IMR-90 (cell line): ENCODE measurements at regions of chr1 and their contacts with region 1.

Region 1: DNA sequence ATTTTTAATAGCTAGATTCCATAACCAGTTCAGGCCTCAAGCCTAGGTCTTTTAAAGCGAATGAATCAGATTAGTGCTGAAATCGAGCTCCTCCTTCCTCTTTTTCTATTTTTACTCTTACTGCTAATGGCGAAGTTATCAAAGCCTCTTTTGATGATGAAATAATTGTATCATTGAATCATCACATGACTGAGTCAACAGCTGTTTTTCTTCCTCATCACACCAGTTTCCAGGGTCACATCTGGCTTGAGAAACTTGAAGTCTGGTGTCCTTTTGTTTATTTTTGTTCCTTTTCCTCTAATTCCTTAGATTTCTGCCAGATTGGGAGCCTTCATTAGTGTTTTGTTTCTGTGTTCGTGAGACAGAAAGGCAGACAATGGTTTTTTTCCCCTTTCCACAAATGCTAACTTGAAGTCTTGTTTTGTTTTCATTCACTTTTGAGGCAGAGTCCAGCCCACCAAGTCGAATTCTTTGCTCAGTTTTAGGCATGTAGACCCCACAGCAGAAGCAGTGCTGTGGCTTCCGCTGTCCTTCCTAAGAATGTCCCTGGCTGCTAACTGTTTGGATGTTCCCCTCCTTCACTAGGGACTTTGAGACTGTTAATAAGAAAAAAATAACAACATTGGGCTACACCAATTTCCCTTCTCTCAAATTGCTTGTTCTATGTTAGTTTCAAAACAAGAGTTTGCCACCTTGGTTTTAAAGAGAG is 51.9 kb upstream of the FMOD start:
- DNase-seq: peak; percentile 98
- ATAC-seq: peak; percentile 82
- H3K4me3 ChIP-seq: no peak overlapping the region
- H3K27ac ChIP-seq: peak overlapping the region; percentile 97
- H3K4me1 ChIP-seq: peaks cover 21% of the 10 kb centered on the region
- H3K27me3 ChIP-seq: no peaks in the 10 kb centered on the region
- CTCF ChIP-seq: no peak
- POLR2A ChIP-seq: no peak
- RAD21 ChIP-seq: no peak

Region 2: DNA sequence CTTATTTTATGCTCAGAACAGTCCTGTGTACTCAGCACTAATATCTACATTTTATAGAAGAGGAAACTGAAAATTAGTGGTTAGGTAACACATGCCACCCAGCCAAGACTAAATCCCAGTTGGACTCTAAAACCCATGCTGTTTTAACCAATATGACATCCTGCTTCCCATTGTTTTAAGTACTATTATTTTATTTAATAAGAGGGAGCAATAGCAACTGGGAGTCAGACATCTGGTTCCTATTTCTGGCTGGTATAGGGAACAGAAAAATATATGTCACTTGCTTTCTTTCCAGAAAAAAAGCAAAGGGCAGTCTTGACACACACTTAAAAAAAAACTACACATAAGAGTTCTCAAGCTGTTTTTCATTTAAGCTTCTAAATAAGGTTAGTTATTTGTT is 487.6 kb before region 1 on chr1:
- CTCF ChIA-PET with region 1: no interaction called
- POLR2A ChIA-PET with region 1: no interaction called
- dilution Hi-C with region 1: no loop called
- in situ Hi-C with region 1: no loop called
- intact Hi-C with region 1: no loop called
- DNase-seq: no peak
- ATAC-seq: no peak
- H3K4me3 ChIP-seq: no peak overlapping the region
- H3K27ac ChIP-seq: no peak overlapping the region
- H3K4me1 ChIP-seq: no peaks in the 10 kb centered on the region
- H3K27me3 ChIP-seq: no peaks in the 10 kb centered on the region
- CTCF ChIP-seq: no peak
- POLR2A ChIP-seq: no peak
- RAD21 ChIP-seq: no peak

Region 3: DNA sequence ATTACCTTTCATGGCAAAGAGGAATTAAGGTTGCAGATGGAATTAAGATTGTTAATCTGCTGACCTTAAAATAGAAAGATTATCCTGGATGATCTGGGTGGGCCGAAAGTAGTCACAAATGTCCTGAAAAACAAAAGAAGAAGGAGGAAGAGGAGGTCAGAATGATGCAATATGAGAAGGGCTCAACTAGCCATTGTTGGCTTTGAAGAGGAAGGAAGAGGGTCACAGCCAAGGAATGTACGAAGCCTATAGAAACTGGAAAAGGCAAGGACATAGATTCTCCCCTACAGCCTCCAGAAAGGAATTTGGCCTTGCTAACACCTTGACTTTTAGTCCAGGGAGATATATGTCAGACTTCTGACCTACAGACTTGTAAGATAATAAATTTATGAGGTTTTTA is 12.5 kb before region 1 on chr1:
- CTCF ChIA-PET with region 1: no interaction called
- POLR2A ChIA-PET with region 1: no interaction called
- dilution Hi-C with region 1: no loop called
- in situ Hi-C with region 1: no loop called
- intact Hi-C with region 1: no loop called
- DNase-seq: no peak
- ATAC-seq: no peak
- H3K4me3 ChIP-seq: no peak overlapping the region
- H3K27ac ChIP-seq: no peak overlapping the region
- H3K4me1 ChIP-seq: no peaks in the 10 kb centered on the region
- H3K27me3 ChIP-seq: peaks cover 10% of the 10 kb centered on the region
- CTCF ChIP-seq: no peak
- POLR2A ChIP-seq: no peak
- RAD21 ChIP-seq: no peak

Region 4: GRCh38 chr1:203475012-203475981 is 72.5 kb after region 1 on chr1 and contains the start of gene PRELP:
- CTCF ChIA-PET with region 1: no interaction called
- POLR2A ChIA-PET with region 1: no interaction called
- dilution Hi-C with region 1: no loop called
- in situ Hi-C with region 1: no loop called
- intact Hi-C with region 1: loop called (anchors 5 kb)
- DNase-seq: peak; percentile 16
- ATAC-seq: peak; percentile 33
- H3K4me3 ChIP-seq: no peak within 1 kb of the TSS
- H3K27ac ChIP-seq: no peak within 1 kb of the TSS
- H3K4me1 ChIP-seq: peaks cover 17% of the 10 kb centered on the region
- H3K27me3 ChIP-seq: peaks cover 15% of the 10 kb centered on the region
- CTCF ChIP-seq: no peak
- POLR2A ChIP-seq: no peak
- RAD21 ChIP-seq: no peak
- total RNA-seq, gene PRELP: under 0.01 TPM in 1 of 2 replicates, not detected in the other